Activated CD4-positive, alpha-beta memory T cell treated with anti-CD3 and anti-CD28 coated beads for 36 hours (primary cell): ENCODE measurements at regions of chr1 and their contacts with region 1.

Region 1: GRCh38 chr1:101288491-101288944 is 51.7 kb downstream of the S1PR1 start:
- DNase-seq: peak; percentile 78
- H3K4me3 Mint-ChIP-seq: no peak overlapping the region
- H3K27ac Mint-ChIP-seq: peak overlapping the region; percentile 66
- H3K4me1 Mint-ChIP-seq: peaks cover 80% of the 10 kb centered on the region
- H3K27me3 Mint-ChIP-seq: no peaks in the 10 kb centered on the region

Region 2: GRCh38 chr1:100921109-100921706 is 367.3 kb before region 1 on chr1:
- CTCF ChIA-PET with region 1: interaction called, 63 read pairs
- POLR2A ChIA-PET with region 1: no interaction called
- intact Hi-C with region 1: loop called (anchors 1 kb)
- DNase-seq: no peak
- H3K4me3 Mint-ChIP-seq: no peak overlapping the region
- H3K27ac Mint-ChIP-seq: peak overlapping the region; percentile 52
- H3K4me1 Mint-ChIP-seq: peaks cover 56% of the 10 kb centered on the region
- H3K27me3 Mint-ChIP-seq: no peaks in the 10 kb centered on the region

Region 3: DNA sequence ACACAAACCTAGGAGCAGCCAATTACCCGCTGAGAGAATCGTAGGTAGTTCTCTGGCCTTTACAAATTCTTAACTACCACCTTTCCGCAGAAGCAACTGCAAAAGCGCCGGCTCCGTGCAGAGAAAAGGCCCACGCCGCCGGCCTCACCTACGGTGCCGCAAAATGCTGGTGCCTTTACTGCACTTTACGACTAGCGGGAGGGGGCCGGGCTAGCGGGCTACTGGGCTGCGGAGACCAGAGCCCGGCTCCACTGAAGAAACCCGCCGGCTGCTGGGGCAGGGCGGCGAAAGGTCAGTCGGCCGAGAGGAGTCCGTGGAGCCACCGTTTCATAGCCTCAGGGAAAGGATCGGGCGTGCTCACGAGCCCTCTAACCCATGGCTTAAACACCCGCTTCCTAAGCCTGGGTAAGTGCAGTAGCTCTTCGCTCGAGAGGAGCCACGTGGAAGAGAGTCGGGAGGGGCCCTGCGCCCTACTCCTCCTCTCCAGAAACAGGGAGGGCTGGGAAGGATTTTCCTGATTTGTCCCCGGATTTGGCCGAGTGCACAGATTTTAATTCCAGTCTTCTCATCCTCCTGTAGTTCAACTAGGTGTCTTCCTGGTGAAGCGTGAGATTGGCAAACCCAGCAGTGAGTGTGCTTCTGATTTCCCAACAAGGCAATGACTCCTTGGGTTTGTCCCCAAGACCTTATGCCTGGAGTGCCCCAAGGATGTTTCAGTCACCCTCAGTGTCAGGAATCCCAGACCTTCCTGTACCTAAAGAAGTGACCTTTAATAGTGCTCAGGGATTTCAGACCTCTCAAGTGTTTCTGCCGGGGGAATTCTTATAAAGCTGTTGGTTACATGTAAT is 262.6 kb before region 1 on chr1 and contains the start of gene DPH5:
- CTCF ChIA-PET with region 1: interaction called, 11 read pairs
- POLR2A ChIA-PET with region 1: no interaction called
- intact Hi-C with region 1: loop called (anchors 1 kb)
- DNase-seq: peak; percentile 94
- H3K4me3 Mint-ChIP-seq: peak within 1 kb of the TSS; percentile 89
- H3K27ac Mint-ChIP-seq: peak within 1 kb of the TSS; percentile 89
- H3K4me1 Mint-ChIP-seq: peaks cover 54% of the 10 kb centered on the region
- H3K27me3 Mint-ChIP-seq: no peaks in the 10 kb centered on the region
- total RNA-seq, gene DPH5: 56.5 to 59.6 TPM

Region 4: DNA sequence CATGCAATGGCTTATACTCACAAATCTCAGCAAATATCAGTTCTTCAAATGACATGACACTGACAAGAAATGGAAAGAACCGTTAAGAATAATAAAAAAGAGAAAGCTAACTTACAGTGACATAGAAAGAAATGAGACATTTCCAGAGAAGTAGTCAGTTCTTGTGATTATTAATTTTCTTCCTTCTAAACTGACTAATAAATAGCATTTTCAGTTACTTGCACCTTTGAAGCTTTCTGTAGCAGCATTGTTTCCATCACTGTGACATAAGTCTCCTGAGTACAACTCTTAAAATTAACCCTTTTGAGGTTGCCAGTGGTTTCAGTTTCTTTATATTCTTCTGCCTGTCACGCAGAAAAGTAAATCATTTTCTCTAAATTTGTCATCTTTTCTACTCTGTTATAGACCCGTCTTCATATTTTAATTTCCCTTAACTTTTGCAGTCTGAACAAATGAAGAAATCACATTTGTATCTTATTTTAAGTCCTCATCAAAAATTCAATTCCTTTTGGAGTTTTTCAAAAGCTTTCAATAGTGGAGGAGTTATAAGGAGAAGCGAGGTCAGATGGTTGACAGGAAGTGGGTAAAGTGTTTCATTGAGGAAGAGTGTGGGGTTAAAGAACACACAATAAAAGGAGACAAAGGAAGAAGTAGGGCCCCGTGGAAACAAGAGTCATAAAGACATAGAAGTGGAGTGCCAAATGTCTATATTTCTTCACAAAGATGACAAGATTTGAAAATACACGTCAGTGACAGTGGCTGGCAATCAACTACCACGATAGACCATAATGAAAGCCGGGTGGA is 109.6 kb before region 1 on chr1:
- CTCF ChIA-PET with region 1: interaction called, 13 read pairs
- POLR2A ChIA-PET with region 1: interaction called, 21 read pairs
- intact Hi-C with region 1: loop called (anchors 1 kb)
- DNase-seq: peak; percentile 58
- H3K4me3 Mint-ChIP-seq: peak overlapping the region; percentile 71
- H3K27ac Mint-ChIP-seq: peak overlapping the region; percentile 100
- H3K4me1 Mint-ChIP-seq: peaks cover 79% of the 10 kb centered on the region
- H3K27me3 Mint-ChIP-seq: no peaks in the 10 kb centered on the region

Region 5: DNA sequence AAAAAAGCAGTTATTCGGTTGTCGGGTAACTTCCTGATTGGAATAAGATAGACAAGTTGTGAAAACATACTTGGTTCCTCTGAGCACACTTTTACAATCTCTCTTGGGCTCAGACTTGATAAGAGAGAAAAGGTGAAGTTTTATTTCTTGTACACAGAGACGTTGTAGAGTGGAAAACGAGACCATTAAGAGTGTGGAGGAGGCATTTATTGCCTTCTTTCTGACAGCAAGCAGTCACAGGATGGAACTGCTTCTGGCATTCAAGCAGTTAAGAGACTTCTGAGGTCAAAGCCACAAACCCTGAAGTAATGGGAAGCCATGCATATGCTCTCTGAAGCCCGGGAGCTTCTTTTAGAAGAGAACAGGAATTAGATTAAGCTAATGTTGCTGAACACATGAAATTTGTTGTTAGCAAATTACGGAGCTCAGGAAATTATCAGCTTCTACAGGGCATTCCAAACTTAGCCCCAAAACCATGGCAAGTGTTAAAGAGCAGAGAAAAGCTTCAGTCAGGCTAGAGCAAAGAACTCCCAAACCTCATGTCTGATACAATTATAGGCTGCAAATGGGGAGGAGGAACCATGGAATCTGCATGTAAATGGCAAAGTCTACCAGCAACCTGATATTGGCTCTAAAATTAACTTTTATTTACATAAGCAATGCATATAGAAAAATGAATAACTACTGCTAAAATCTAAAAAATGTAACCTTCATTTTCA is 25.7 kb before region 1 on chr1:
- CTCF ChIA-PET with region 1: interaction called, 18 read pairs
- POLR2A ChIA-PET with region 1: interaction called, 3 read pairs
- intact Hi-C with region 1: loop called (anchors 1 kb)
- DNase-seq: no peak
- H3K4me3 Mint-ChIP-seq: peak overlapping the region; percentile 58
- H3K27ac Mint-ChIP-seq: peak overlapping the region; percentile 75
- H3K4me1 Mint-ChIP-seq: peaks cover 83% of the 10 kb centered on the region
- H3K27me3 Mint-ChIP-seq: no peaks in the 10 kb centered on the region

Region 6: DNA sequence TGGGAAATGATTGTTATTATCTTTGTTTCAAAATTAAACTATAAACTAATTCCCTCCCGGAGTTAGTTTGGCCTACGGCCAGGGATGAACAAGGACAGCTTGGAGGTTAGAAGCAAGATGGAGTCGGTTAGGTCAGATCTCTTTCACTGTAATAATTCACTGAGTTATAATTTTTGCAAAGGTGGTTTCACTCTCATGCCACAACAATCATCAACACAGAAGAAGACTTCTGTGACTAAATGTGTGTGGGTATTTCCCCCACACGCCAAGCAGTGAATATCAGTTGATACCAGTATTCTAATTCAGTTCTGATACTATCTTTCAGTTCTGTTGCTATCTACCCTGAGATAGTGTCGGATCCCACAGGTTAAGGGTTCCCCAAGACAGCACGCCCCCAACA is 163.4 kb after region 1 on chr1:
- CTCF ChIA-PET with region 1: no interaction called
- POLR2A ChIA-PET with region 1: no interaction called
- intact Hi-C with region 1: loop called (anchors 5 kb)
- DNase-seq: peak; percentile 44
- H3K4me3 Mint-ChIP-seq: no peak overlapping the region
- H3K27ac Mint-ChIP-seq: peak overlapping the region; percentile 31
- H3K4me1 Mint-ChIP-seq: peaks cover 34% of the 10 kb centered on the region
- H3K27me3 Mint-ChIP-seq: peaks cover 10% of the 10 kb centered on the region